ENCODE measurements at regions of chr10 and their contacts with region 1.

Region 1: GRCh38 chr10:93413252-93413689 is 68.9 kb downstream of the MYOF start:
- DNase-seq: peak in 8 of 9 donors; percentile 28 to 77 (median 70)
- ATAC-seq: peak; percentile 86
- H3K4me3 ChIP-seq: peak overlapping the region; percentile 7
- H3K4me3 Mint-ChIP-seq: peak overlapping the region; percentile 48 to 81 (median 72)
- H3K27ac ChIP-seq: peak overlapping the region; percentile 4
- H3K27ac Mint-ChIP-seq: peak overlapping the region; percentile 81 to 94 (median 89)
- H3K4me1 ChIP-seq: peaks cover 26 to 66% of the 10 kb centered on the region in 2 donors
- H3K4me1 Mint-ChIP-seq: peaks cover 48 to 83% (median 76%) of the 10 kb centered on the region in 7 donors
- H3K27me3 ChIP-seq: no peaks in the 10 kb centered on the region
- H3K27me3 Mint-ChIP-seq: no peaks in the 10 kb centered on the region

Region 2: DNA sequence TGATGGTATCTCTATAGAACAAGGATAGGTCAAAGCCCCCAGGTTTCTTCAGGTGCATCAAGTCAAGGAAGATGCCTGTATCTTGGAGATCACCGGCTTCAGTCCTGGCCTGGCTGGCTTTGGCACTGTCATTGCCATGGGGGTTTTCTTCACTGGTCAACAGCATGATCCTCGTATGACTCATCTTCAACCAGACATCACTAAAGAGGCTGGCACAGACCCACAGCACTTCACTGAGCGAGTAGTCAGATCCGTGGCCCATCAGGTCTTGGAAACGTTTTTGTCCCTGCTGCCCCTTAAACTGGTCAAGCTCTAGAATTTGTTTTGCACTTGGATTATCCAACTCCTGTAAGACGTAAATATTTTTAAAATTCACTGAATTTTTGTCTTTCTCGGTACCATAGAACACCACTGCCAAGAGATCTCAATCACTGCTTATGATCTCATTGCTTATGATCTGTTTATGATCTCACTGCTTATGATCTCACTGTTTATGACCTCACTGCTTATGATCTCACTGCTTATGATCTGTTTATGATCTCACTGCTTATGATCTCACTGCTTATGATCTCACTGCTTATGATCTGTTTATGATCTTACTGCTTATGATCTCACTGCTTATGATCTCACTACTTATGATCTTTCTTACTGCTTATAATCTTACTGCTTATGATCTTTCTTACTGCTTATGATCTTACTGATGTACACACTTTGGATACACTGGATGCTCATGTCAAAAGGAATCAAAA is 204.4 kb before region 1 on chr10:
- CTCF ChIA-PET with region 1: no interaction called
- POLR2A ChIA-PET with region 1: no interaction called
- intact Hi-C with region 1: no loop called
- DNase-seq: no peak
- ATAC-seq: no peak
- H3K4me3 ChIP-seq: no peak overlapping the region
- H3K4me3 Mint-ChIP-seq: no peak overlapping the region
- H3K27ac ChIP-seq: no peak overlapping the region
- H3K27ac Mint-ChIP-seq: no peak overlapping the region
- H3K4me1 ChIP-seq: no peaks in the 10 kb centered on the region
- H3K4me1 Mint-ChIP-seq: no peaks in the 10 kb centered on the region
- H3K27me3 ChIP-seq: no peaks in the 10 kb centered on the region
- H3K27me3 Mint-ChIP-seq: no peaks in the 10 kb centered on the region

Region 3: DNA sequence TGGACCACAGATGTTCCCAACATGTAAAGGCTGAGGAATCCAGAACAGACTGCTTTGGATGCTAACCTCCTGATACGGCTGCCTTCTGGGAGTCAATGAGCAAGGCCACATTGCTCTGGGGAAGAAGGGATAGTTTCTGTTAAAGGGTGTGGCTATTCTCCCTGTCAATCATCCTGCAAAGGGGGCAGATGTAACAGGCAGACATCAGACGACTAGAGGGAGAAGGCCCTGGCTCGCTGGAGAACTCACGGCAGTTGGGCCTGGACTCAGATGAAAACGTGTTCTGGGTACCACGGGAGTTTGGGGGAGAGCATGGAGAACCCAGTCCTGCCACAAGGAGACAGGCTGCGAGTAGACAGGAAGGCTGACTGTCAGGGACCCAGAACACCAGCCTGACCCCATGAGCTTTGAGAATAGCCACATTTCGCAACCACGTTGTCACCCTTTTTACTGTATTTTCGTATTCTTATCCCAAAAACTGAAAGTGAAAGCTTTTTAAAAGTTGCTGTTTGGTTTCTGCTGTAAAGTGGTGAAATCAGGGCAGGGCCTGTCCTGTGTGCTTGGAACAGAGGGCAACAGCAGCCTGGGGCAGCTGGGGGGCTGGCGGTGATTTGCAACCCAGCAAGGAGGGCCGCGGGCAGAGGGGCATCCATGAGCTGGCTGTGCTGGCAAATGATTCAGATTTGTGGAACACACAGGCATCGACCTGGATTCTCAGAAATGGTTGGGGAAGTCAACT is 26.5 kb before region 1 on chr10:
- CTCF ChIA-PET with region 1: interaction called, 3 read pairs
- POLR2A ChIA-PET with region 1: no interaction called
- intact Hi-C with region 1: loop called in 1 of 2 experiments (anchors 1 kb)
- DNase-seq: no peak
- ATAC-seq: peak; percentile 77
- H3K4me3 ChIP-seq: no peak overlapping the region
- H3K4me3 Mint-ChIP-seq: peak overlapping the region; percentile 26 to 77 (median 40)
- H3K27ac ChIP-seq: no peak overlapping the region
- H3K27ac Mint-ChIP-seq: peak overlapping the region in 8 of 9 donors; percentile 1 to 94 (median 67)
- H3K4me1 ChIP-seq: peaks cover 0 to 14% of the 10 kb centered on the region in 2 donors
- H3K4me1 Mint-ChIP-seq: peaks cover 26 to 42% (median 35%) of the 10 kb centered on the region in 7 donors
- H3K27me3 ChIP-seq: no peaks in the 10 kb centered on the region
- H3K27me3 Mint-ChIP-seq: peaks cover 0 to 10% (median 3%) of the 10 kb centered on the region in 5 donors

Region 4: GRCh38 chr10:93431361-93431760 is 18.1 kb after region 1 on chr10:
- CTCF ChIA-PET with region 1: no interaction called
- POLR2A ChIA-PET with region 1: no interaction called
- intact Hi-C with region 1: no loop called
- DNase-seq: no peak
- ATAC-seq: no peak
- H3K4me3 ChIP-seq: no peak overlapping the region
- H3K4me3 Mint-ChIP-seq: no peak overlapping the region
- H3K27ac ChIP-seq: no peak overlapping the region
- H3K27ac Mint-ChIP-seq: peak overlapping the region in 1 of 9 donors; percentile 47
- H3K4me1 ChIP-seq: no peaks in the 10 kb centered on the region
- H3K4me1 Mint-ChIP-seq: peaks cover 0 to 6% (median 6%) of the 10 kb centered on the region in 7 donors
- H3K27me3 ChIP-seq: no peaks in the 10 kb centered on the region
- H3K27me3 Mint-ChIP-seq: no peaks in the 10 kb centered on the region